ENCODE measurements at regions of chr3 and their contacts with region 1.

Region 1: GRCh38 chr3:107740992-107741896 is 218.5 kb downstream of the BBX start:
- DNase-seq: peak in 3 of 14 experiments; percentile 37 to 40 (median 40)
- ATAC-seq: no peak
- H3K4me3 ChIP-seq: no peak overlapping the region
- H3K4me3 Mint-ChIP-seq: no peak overlapping the region
- H3K27ac ChIP-seq: no peak overlapping the region
- H3K27ac Mint-ChIP-seq: no peak overlapping the region
- H3K4me1 ChIP-seq: no peaks in the 10 kb centered on the region
- H3K4me1 Mint-ChIP-seq: no peaks in the 10 kb centered on the region
- H3K27me3 ChIP-seq: no peaks in the 10 kb centered on the region
- H3K27me3 Mint-ChIP-seq: no peaks in the 10 kb centered on the region
- CTCF ChIP-seq: peak; percentile 71

Region 2: DNA sequence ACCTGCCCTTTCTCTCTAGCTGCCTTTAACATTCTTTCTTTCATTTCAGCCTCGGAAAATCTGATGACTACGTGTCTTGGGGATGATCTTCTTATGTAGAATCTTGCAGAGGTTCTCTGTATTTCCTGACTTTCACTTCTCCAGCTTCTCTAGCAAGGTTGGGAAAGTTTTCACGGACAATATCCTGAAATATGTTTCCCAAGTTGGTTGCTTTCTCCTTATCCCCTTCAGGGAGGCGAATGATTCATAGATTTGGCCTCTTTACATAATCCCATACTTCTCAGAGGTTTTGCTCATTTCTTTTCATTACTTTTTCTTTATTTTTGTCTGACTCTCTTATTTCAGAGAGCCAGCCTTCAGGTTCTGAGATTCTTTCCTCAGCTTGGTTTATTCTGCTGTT is 426.1 kb before region 1 on chr3:
- CTCF ChIA-PET with region 1: no interaction called
- POLR2A ChIA-PET with region 1: no interaction called
- intact Hi-C with region 1: no loop called
- DNase-seq: no peak
- ATAC-seq: no peak
- H3K4me3 ChIP-seq: no peak overlapping the region
- H3K4me3 Mint-ChIP-seq: no peak overlapping the region
- H3K27ac ChIP-seq: no peak overlapping the region
- H3K27ac Mint-ChIP-seq: no peak overlapping the region
- H3K4me1 ChIP-seq: no peaks in the 10 kb centered on the region
- H3K4me1 Mint-ChIP-seq: no peaks in the 10 kb centered on the region
- H3K27me3 ChIP-seq: peaks cover 4% of the 10 kb centered on the region in 2 experiments
- H3K27me3 Mint-ChIP-seq: peaks cover 13% of the 10 kb centered on the region
- CTCF ChIP-seq: no peak

Region 3: GRCh38 chr3:107370907-107371306 is 370.3 kb before region 1 on chr3:
- CTCF ChIA-PET with region 1: no interaction called
- POLR2A ChIA-PET with region 1: no interaction called
- intact Hi-C with region 1: no loop called
- DNase-seq: no peak
- ATAC-seq: no peak
- H3K4me3 ChIP-seq: no peak overlapping the region
- H3K4me3 Mint-ChIP-seq: no peak overlapping the region
- H3K27ac ChIP-seq: no peak overlapping the region
- H3K27ac Mint-ChIP-seq: no peak overlapping the region
- H3K4me1 ChIP-seq: no peaks in the 10 kb centered on the region
- H3K4me1 Mint-ChIP-seq: no peaks in the 10 kb centered on the region
- H3K27me3 ChIP-seq: no peaks in the 10 kb centered on the region
- H3K27me3 Mint-ChIP-seq: peaks cover 4% of the 10 kb centered on the region
- CTCF ChIP-seq: no peak

Region 4: GRCh38 chr3:107574650-107575049 is 166.6 kb before region 1 on chr3:
- CTCF ChIA-PET with region 1: no interaction called
- POLR2A ChIA-PET with region 1: no interaction called
- intact Hi-C with region 1: loop called (anchors 5 kb)
- DNase-seq: peak in 3 of 14 experiments; percentile 33 to 45 (median 41)
- ATAC-seq: peak; percentile 46
- H3K4me3 ChIP-seq: no peak overlapping the region
- H3K4me3 Mint-ChIP-seq: no peak overlapping the region
- H3K27ac ChIP-seq: no peak overlapping the region
- H3K27ac Mint-ChIP-seq: no peak overlapping the region
- H3K4me1 ChIP-seq: peaks cover 3% of the 10 kb centered on the region
- H3K4me1 Mint-ChIP-seq: peaks cover 46% of the 10 kb centered on the region
- H3K27me3 ChIP-seq: no peaks in the 10 kb centered on the region
- H3K27me3 Mint-ChIP-seq: no peaks in the 10 kb centered on the region
- CTCF ChIP-seq: peak; percentile 60

Region 5: GRCh38 chr3:107690522-107691138 is 50.6 kb before region 1 on chr3:
- CTCF ChIA-PET with region 1: interaction called, 12 read pairs
- POLR2A ChIA-PET with region 1: no interaction called
- intact Hi-C with region 1: no loop called
- DNase-seq: peak in 3 of 14 experiments; percentile 60 to 73 (median 70)
- ATAC-seq: peak; percentile 73
- H3K4me3 ChIP-seq: no peak overlapping the region
- H3K4me3 Mint-ChIP-seq: no peak overlapping the region
- H3K27ac ChIP-seq: no peak overlapping the region
- H3K27ac Mint-ChIP-seq: no peak overlapping the region
- H3K4me1 ChIP-seq: peaks cover 3% of the 10 kb centered on the region
- H3K4me1 Mint-ChIP-seq: peaks cover 37% of the 10 kb centered on the region
- H3K27me3 ChIP-seq: no peaks in the 10 kb centered on the region
- H3K27me3 Mint-ChIP-seq: no peaks in the 10 kb centered on the region
- CTCF ChIP-seq: peak; percentile 59